ENCODE measurements at regions of chr9 and their contacts with region 1.

Region 1: GRCh38 chr9:134443168-134444037 is 117.1 kb downstream of the RXRA start:
- DNase-seq: peak; percentile 77 to 96 (median 90)

Region 2: DNA sequence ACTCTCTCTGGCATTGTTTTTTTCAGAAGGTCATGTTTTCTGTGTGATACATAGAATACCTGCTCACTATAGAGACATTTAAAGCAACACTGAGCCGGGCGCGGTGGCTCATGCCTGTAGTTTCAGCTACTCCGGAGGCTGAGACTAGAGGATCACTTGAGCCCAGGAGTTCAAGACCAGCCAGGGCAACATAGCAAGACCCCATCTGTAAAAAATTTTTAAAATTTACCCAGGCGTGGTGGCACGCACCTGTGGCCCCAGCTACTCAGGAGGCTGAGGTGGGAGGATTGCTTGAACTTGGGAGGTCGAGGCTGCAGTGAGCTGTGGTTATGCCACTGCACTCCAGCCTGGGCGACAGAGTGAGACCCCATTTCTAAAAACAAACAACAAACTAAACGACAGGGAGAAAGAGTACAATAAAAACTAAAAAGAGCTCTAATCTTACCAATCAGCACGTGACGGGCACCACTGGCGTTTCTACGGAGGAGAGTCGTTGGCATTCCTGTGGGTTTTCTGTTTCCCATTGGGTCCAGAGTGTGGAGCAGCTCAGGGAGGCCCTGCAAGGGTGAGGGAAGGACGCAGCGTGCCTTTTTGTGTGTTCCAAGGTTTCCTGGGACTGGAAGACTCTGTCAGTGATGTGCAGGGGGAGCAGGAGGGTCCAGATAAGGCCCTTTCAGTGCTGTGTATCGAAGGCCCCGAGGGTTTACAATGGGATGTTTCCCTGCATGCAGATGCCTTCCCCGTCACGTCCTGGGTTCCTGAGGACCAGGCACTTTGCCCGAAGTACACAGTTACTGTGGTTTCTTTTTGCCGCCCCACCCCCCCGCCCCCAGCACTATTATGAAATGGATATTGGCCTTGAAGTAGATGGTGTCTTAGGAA is 271.8 kb before region 1 on chr9:
- intact Hi-C with region 1: loop called (anchors 2 kb)
- DNase-seq: no peak